ENCODE measurements at regions of chr1 and their contacts with region 1.

Region 1: GRCh38 chr1:43227143-43227764 is 42.5 kb upstream of the TMEM125 start:
- DNase-seq: peak; percentile 90
- H3K4me3 ChIP-seq: no peak overlapping the region
- H3K27ac ChIP-seq: no peak overlapping the region
- H3K4me1 ChIP-seq: no peaks in the 10 kb centered on the region
- H3K27me3 ChIP-seq: no peaks in the 10 kb centered on the region
- CTCF ChIP-seq: peak; percentile 88 to 94 (median 90)
- EP300 ChIP-seq: no peak
- POLR2A ChIP-seq: no peak

Region 2: DNA sequence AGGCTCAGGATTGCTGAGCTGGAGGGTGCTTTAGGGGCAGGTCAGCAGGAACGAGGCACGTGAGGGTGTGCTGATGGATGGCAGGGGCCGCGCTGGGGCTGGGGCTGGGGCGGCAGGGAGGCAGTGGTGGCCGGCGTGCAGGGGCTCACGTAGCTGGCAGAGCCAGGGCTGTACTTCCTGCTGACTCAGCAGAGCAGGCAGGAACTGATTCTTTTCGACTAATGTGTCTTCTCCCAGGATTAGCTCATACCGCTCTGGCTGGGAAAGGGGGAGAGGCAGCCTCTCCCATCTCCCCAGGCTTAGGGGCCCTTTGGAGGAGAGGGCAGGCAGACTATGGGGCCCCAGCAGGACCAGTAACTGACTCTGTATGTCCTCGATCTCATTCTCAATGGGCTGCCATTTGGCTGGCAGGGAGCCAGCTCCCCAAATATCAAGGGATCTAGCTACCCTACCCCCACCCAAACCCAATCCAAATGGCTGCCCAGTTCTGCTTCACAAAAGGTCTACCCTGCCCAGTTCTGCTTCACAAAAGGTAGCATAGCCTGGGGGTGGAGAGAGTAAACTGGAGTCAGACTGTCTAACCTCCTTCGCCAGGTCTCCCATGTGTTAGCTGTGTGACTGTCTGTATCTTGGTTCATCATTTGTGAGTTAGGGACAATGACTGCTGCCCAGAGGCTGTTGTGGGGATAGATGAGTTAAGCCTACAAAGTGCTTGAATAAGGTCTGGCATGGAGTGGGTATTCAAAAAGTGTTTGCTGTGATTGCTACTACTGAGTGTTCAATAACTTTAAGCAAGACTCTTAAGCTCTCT is 168.5 kb before region 1 on chr1:
- intact Hi-C with region 1: no loop called
- DNase-seq: no peak
- H3K4me3 ChIP-seq: no peak overlapping the region
- H3K27ac ChIP-seq: no peak overlapping the region
- H3K4me1 ChIP-seq: peaks cover 0 to 8% (median 4%) of the 10 kb centered on the region in 4 donors
- H3K27me3 ChIP-seq: no peaks in the 10 kb centered on the region
- CTCF ChIP-seq: no peak
- EP300 ChIP-seq: no peak
- POLR2A ChIP-seq: no peak

Region 3: DNA sequence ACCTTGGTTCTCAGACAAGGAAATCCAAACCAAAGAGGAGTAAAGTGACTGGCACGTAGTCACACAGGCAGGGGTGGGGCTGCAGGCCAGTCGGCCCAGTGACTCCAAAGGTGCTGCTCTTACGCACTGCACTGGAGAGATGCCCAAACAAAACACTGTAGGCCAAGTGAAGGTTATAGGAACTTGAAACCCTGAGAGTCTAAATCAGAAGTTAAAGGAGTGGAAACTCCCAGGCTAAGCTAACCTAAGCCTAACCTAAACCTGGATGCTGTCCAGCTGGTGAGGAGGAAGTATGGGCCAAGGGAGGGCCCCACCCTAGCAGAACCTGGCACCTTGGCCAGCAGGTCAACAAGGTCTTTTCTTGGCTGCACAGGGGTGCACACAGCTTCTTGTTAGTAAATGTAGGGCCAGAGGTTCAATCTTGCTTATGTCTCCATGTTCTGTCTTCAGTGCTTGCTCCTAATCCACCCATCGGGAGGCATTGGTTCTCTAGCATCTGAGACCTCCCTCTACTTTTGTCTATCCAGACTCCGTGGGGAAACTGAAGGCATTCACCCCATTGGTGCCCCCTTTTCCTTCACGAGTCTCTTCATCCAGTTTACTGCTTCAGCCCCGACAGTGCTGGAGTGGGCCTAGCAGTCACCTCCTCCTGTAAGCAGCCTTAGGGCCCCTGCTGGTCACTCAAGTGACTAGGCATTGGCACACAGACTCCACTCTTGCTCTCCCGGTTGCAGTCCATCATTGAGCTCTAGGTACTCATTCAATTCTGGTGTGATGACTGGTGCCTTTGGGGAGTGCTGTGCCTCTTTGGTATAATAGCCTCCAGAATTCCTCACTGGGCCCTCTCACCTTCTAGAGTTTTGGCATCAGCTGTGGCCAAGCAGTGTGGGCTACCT is 29.7 kb after region 1 on chr1:
- intact Hi-C with region 1: no loop called
- DNase-seq: no peak
- H3K4me3 ChIP-seq: no peak overlapping the region
- H3K27ac ChIP-seq: no peak overlapping the region
- H3K4me1 ChIP-seq: no peaks in the 10 kb centered on the region
- H3K27me3 ChIP-seq: no peaks in the 10 kb centered on the region
- CTCF ChIP-seq: no peak
- EP300 ChIP-seq: no peak
- POLR2A ChIP-seq: no peak

Region 4: DNA sequence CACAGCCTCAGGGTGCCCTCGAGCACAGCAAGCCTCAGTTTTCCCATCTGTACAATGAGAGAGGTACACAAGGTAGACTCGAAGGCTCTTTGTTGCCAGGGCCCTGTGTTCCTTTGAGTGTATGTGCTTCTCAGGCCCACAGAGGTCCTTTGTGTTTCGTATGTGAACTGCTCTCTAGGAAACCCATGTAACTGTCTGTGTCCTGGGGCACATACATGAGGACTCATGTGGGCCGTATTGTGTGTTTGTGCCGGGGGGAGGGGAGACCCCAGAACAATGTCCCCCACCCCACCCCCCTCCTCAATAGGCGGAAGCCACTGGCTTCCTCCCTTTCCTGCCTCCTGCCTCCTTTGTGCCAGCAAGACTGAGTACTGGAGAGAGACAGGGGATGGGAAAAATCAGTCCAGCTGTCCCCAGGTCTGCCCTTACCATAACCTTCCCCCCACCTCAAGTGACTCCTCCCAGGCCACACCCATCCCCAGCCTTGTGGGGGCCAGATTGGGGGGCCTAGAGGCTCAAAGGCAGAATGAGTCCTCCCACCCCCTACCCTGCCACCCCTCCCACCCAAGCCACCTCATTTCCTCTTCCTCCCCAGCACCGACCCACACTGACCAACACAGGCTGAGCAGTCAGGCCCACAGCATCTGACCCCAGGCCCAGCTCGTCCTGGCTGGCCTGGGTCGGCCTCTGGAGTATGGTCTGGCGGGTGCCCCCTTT is 73.3 kb after region 1 on chr1 and contains the start of gene TIE1:
- intact Hi-C with region 1: no loop called
- DNase-seq: no peak
- H3K4me3 ChIP-seq: peak within 1 kb of the TSS in 3 of 4 donors; percentile 3 to 17 (median 12)
- H3K27ac ChIP-seq: peak within 1 kb of the TSS in 3 of 4 donors; percentile 12 to 62 (median 32)
- H3K4me1 ChIP-seq: peaks cover 0 to 16% (median 11%) of the 10 kb centered on the region in 4 donors
- H3K27me3 ChIP-seq: no peaks in the 10 kb centered on the region
- CTCF ChIP-seq: no peak
- EP300 ChIP-seq: no peak
- POLR2A ChIP-seq: no peak
- total RNA-seq, gene TIE1: 8.8 to 33.8 (median 10.2) TPM

Region 5: DNA sequence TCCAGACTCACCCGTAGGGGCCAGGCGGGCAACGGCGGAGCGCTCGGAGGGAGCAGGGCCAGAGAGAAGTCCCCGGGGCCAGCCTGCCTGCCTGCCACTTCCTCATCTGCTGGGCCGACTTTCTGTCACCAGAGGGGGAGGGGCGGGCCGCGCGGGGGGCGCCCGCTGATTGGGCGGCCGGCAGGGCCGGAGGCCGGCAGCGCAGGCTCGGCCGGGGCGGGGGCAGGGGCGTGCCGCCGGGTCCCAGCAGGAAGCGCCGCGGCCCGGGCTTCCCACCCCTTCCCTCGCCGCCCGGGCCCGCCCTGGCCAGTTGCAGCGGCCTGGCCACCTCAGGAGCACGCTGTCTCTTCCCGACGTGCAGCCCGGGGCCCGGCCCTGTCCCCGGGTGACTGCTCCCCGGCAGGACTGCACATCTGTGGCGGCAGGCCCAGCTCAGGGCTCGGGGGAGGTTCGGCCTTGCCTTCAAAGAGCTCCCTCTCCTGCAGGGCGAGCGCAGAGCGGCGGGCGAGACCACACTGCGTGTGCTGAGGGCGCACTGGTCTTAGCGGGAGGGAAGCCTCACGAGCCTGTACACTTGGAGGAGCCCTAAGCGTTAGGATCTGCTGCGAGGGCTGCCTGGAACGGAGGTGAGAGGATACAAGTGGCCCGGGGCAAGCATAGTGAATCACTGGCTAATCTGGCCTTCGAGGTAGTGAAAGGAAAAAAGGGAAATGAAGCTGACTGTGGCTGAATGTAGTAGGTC is 140.8 kb after region 1 on chr1 and contains the start of gene ELOVL1:
- intact Hi-C with region 1: loop called (anchors 1 kb)
- DNase-seq: peak; percentile 95
- H3K4me3 ChIP-seq: peak within 1 kb of the TSS; percentile 86 to 89 (median 88)
- H3K27ac ChIP-seq: peak within 1 kb of the TSS; percentile 92 to 96 (median 94)
- H3K4me1 ChIP-seq: peaks cover 0 to 29% (median 24%) of the 10 kb centered on the region in 4 donors
- H3K27me3 ChIP-seq: no peaks in the 10 kb centered on the region
- CTCF ChIP-seq: peak in 1 of 4 experiments; percentile 29
- EP300 ChIP-seq: no peak
- POLR2A ChIP-seq: peak in 1 of 2 donors; percentile 72
- total RNA-seq, gene ELOVL1: 26.8 to 39.6 (median 29.5) TPM

Region 6: GRCh38 chr1:43414634-43415223 is 187.5 kb after region 1 on chr1:
- intact Hi-C with region 1: loop called (anchors 1 kb)
- DNase-seq: no peak
- H3K4me3 ChIP-seq: no peak overlapping the region
- H3K27ac ChIP-seq: no peak overlapping the region
- H3K4me1 ChIP-seq: no peaks in the 10 kb centered on the region
- H3K27me3 ChIP-seq: no peaks in the 10 kb centered on the region
- CTCF ChIP-seq: peak; percentile 40 to 56 (median 44)
- EP300 ChIP-seq: no peak
- POLR2A ChIP-seq: no peak